Dendritic cell treated with granulocyte-macrophage colony-stimulating factor and Interleukin-4, amounts not matched to agents 40 ng/mL and 50 ng/mL, for 4 days (primary cell): ENCODE measurements at regions of chr12 and their contacts with region 1.

Region 1: DNA sequence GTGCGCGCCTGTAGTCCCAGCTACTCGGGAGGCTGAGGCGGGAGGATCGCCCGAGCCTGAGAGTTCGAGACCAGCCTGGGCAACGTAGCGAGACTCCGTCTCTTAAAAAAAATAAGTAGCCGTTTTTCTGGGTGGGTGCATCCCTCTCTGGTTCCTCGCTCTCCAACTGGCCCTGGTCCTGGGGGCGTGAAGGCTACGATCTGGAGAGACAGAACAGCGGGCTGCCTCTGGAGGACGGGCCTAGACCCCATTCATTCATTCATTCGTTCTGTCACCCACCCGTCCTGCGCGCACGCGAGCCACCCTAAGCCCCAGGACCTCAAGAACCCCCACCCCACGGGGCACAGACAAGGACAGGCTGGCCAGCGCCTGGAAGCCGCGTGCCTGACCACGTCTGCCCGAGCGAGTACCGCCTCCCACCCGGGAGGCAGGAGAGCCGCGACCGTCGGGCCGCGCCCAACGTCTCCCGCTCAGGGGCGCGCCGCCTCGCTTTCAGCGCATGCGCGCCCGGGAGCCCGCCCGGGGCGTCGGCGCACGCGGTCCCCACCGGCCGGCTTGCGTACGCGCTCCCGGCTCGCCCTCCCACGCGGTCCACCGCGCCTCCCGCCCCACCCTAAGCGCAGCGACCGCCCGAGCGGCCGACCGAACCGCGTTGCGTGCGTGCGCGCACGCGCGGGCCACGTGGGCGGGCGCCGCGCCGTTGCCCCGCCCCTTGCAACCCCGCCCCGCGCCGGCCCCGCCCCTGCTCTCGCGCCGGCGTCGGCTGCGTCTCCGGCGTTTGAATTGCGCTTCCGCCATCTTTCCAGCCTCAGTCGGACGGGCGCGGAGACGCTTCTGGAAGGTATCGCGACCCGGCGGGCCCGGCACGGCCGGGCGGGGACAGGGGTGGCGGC is at the start of gene RAN:
- H3K4me3 Mint-ChIP-seq: peak within 1 kb of the TSS; percentile 92
- H3K27ac Mint-ChIP-seq: peak within 1 kb of the TSS; percentile 90
- H3K4me1 Mint-ChIP-seq: peaks cover 35% of the 10 kb centered on the region
- H3K27me3 Mint-ChIP-seq: no peaks in the 10 kb centered on the region

Region 2: GRCh38 chr12:130838951-130839769 is 32.4 kb before region 1 on chr12 and contains the start of gene STX2:
- intact Hi-C with region 1: loop called (anchors 1 kb)
- H3K4me3 Mint-ChIP-seq: peak within 1 kb of the TSS; percentile 86
- H3K27ac Mint-ChIP-seq: peak within 1 kb of the TSS; percentile 47
- H3K4me1 Mint-ChIP-seq: peaks cover 34% of the 10 kb centered on the region
- H3K27me3 Mint-ChIP-seq: peaks cover 6% of the 10 kb centered on the region

Region 3: GRCh38 chr12:131260954-131261353 is 389.4 kb after region 1 on chr12:
- intact Hi-C with region 1: no loop called
- H3K4me3 Mint-ChIP-seq: no peak overlapping the region
- H3K27ac Mint-ChIP-seq: no peak overlapping the region
- H3K4me1 Mint-ChIP-seq: no peaks in the 10 kb centered on the region
- H3K27me3 Mint-ChIP-seq: peaks cover 1% of the 10 kb centered on the region